ENCODE measurements at regions of chr3 and their contacts with region 1.

Region 1: GRCh38 chr3:187210545-187211327 is 13.4 kb downstream of the RTP1 start:
- DNase-seq: no peak
- H3K4me3 ChIP-seq: no peak overlapping the region
- H3K27ac ChIP-seq: no peak overlapping the region
- H3K4me1 ChIP-seq: peaks cover 0 to 10% (median 3%) of the 10 kb centered on the region in 6 donors
- H3K27me3 ChIP-seq: no peaks in the 10 kb centered on the region
- CTCF ChIP-seq: no peak
- POLR2A ChIP-seq: no peak

Region 2: GRCh38 chr3:187516446-187517185 is 305.9 kb after region 1 on chr3:
- intact Hi-C with region 1: no loop called
- DNase-seq: no peak
- H3K4me3 ChIP-seq: no peak overlapping the region
- H3K27ac ChIP-seq: no peak overlapping the region
- H3K4me1 ChIP-seq: peaks cover 0 to 4% (median 1%) of the 10 kb centered on the region in 6 donors
- H3K27me3 ChIP-seq: no peaks in the 10 kb centered on the region
- CTCF ChIP-seq: no peak
- POLR2A ChIP-seq: no peak

Region 3: DNA sequence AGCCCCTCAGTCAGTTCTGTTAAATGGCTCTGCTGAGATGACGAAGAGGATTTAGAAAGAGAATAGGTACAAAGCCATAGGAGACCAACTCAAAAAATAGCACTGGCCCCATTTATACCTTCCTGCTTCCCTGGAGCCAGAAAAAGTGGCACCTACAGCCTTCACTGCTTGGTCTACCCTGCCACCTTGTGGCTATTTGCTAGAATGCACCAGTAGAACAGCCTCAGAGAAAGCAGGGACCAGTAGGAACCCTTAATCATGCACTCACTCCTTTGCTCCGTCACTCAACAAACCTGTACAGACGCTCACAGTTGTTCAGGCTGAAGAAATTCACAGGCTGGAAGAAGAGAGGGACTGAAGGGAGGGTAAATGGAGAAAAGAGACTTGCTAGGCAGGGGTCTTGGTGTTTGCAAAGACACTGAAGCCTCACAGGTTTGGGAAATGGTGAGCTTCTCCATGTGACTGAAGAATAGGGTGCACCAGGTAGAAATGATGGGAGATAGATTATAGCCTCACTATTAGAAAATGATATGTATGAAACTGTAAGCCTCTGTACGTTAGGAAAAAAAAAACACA is 503.8 kb after region 1 on chr3:
- intact Hi-C with region 1: loop called (anchors 10 kb)
- DNase-seq: no peak
- H3K4me3 ChIP-seq: no peak overlapping the region
- H3K27ac ChIP-seq: no peak overlapping the region
- H3K4me1 ChIP-seq: peaks cover 0 to 12% (median 6%) of the 10 kb centered on the region in 6 donors
- H3K27me3 ChIP-seq: no peaks in the 10 kb centered on the region
- CTCF ChIP-seq: peak; percentile 89 to 96 (median 93)
- POLR2A ChIP-seq: no peak

Measured in spleen (tissue), 13 donors.